ENCODE measurements at regions of chr15 and their contacts with region 1.

Region 1: GRCh38 chr15:37134699-37135131 is 34.4 kb upstream of the MEIS2 start:
- DNase-seq: peak; percentile 10
- H3K4me3 ChIP-seq: no peak overlapping the region
- H3K27ac ChIP-seq: no peak overlapping the region
- H3K4me1 ChIP-seq: no peaks in the 10 kb centered on the region
- H3K27me3 ChIP-seq: peaks cover 4% of the 10 kb centered on the region
- CTCF ChIP-seq: peak; percentile 64 to 67

Region 2: DNA sequence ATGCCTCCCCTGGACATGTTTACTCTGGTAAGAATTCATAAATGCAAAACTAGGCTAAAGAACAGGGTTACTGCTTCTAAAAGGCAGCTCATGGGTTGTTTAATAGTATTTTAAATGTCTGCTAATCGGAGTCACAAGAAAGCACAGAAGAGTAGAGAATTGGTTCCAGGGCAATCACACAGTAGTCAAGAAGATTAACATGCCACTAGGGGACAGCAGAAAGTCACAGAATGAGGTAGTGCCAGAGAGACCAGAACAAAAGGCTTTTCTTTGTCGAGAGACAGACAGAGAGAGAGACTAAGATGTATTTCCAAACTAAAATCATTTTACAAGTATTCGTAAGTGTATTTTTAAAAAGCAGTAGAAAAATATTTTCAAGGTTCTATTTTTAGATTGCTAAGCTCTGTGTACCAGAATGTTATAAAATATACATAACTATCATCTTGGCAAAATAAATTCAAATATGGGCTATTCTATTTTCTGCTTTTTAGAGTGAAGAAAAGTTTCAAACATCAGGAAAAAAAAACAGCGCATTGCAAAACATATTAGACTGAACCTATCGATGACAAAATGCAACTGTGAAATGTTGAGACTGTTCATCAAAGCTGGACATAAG is 633.5 kb before region 1 on chr15:
- CTCF ChIA-PET with region 1: no interaction called
- dilution Hi-C with region 1: no loop called
- in situ Hi-C with region 1: loop called in 1 of 2 experiments (anchors 25 kb)
- intact Hi-C with region 1: loop called (anchors 1 kb)
- DNase-seq: peak; percentile 63
- H3K4me3 ChIP-seq: no peak overlapping the region
- H3K27ac ChIP-seq: no peak overlapping the region
- H3K4me1 ChIP-seq: no peaks in the 10 kb centered on the region
- H3K27me3 ChIP-seq: no peaks in the 10 kb centered on the region
- CTCF ChIP-seq: peak; percentile 73 to 95

Region 3: GRCh38 chr15:36645106-36645505 is 489.6 kb before region 1 on chr15:
- CTCF ChIA-PET with region 1: no interaction called
- dilution Hi-C with region 1: no loop called
- in situ Hi-C with region 1: no loop called
- intact Hi-C with region 1: loop called (anchors 10 kb)
- DNase-seq: no peak
- H3K4me3 ChIP-seq: no peak overlapping the region
- H3K27ac ChIP-seq: no peak overlapping the region
- H3K4me1 ChIP-seq: peaks cover 6% of the 10 kb centered on the region
- H3K27me3 ChIP-seq: no peaks in the 10 kb centered on the region
- CTCF ChIP-seq: no peak

Region 4: GRCh38 chr15:37106490-37107001 is 28.2 kb before region 1 on chr15:
- CTCF ChIA-PET with region 1: no interaction called
- dilution Hi-C with region 1: no loop called
- in situ Hi-C with region 1: no loop called
- intact Hi-C with region 1: loop called (anchors 2 kb)
- DNase-seq: no peak
- H3K4me3 ChIP-seq: no peak overlapping the region
- H3K27ac ChIP-seq: no peak overlapping the region
- H3K4me1 ChIP-seq: peaks cover 4% of the 10 kb centered on the region
- H3K27me3 ChIP-seq: peaks cover 10% of the 10 kb centered on the region
- CTCF ChIP-seq: peak in 1 of 2 donors; percentile 26

Region 5: GRCh38 chr15:37880009-37880834 is 745.5 kb after region 1 on chr15:
- CTCF ChIA-PET with region 1: no interaction called
- dilution Hi-C with region 1: no loop called
- in situ Hi-C with region 1: loop called in 1 of 2 experiments (anchors 25 kb)
- intact Hi-C with region 1: loop called (anchors 2 kb)
- DNase-seq: peak; percentile 16
- H3K4me3 ChIP-seq: no peak overlapping the region
- H3K27ac ChIP-seq: no peak overlapping the region
- H3K4me1 ChIP-seq: no peaks in the 10 kb centered on the region
- H3K27me3 ChIP-seq: peaks cover 3% of the 10 kb centered on the region
- CTCF ChIP-seq: peak; percentile 73 to 74

Region 6: GRCh38 chr15:37891766-37892368 is 757.2 kb after region 1 on chr15:
- CTCF ChIA-PET with region 1: no interaction called
- dilution Hi-C with region 1: no loop called
- in situ Hi-C with region 1: loop called in 1 of 2 experiments (anchors 25 kb)
- intact Hi-C with region 1: no loop called
- DNase-seq: peak; percentile 42
- H3K4me3 ChIP-seq: no peak overlapping the region
- H3K27ac ChIP-seq: no peak overlapping the region
- H3K4me1 ChIP-seq: no peaks in the 10 kb centered on the region
- H3K27me3 ChIP-seq: no peaks in the 10 kb centered on the region
- CTCF ChIP-seq: peak; percentile 90

Measured in mammary epithelial cell (primary cell).